ENCODE measurements at regions of chr2 and their contacts with region 1.

Region 1: GRCh38 chr2:165293440-165294353 is 54.5 kb downstream of the SCN2A start:
- DNase-seq: peak; percentile 73
- H3K4me3 ChIP-seq: peak overlapping the region; percentile 50
- H3K27ac ChIP-seq: no peak overlapping the region
- H3K27me3 ChIP-seq: no peaks in the 10 kb centered on the region
- CTCF ChIP-seq: peak; percentile 87

Region 2: GRCh38 chr2:164920430-164920829 is 373.3 kb before region 1 on chr2:
- CTCF ChIA-PET with region 1: interaction called, 19 read pairs
- POLR2A ChIA-PET with region 1: no interaction called
- DNase-seq: peak; percentile 81
- H3K4me3 ChIP-seq: peak overlapping the region; percentile 43
- H3K27ac ChIP-seq: peak overlapping the region; percentile 81
- H3K27me3 ChIP-seq: no peaks in the 10 kb centered on the region
- CTCF ChIP-seq: no peak

Region 3: GRCh38 chr2:165008730-165009315 is 284.9 kb before region 1 on chr2:
- CTCF ChIA-PET with region 1: interaction called, 11 read pairs
- POLR2A ChIA-PET with region 1: no interaction called
- DNase-seq: no peak
- H3K4me3 ChIP-seq: no peak overlapping the region
- H3K27ac ChIP-seq: no peak overlapping the region
- H3K27me3 ChIP-seq: no peaks in the 10 kb centered on the region
- CTCF ChIP-seq: no peak

Region 4: DNA sequence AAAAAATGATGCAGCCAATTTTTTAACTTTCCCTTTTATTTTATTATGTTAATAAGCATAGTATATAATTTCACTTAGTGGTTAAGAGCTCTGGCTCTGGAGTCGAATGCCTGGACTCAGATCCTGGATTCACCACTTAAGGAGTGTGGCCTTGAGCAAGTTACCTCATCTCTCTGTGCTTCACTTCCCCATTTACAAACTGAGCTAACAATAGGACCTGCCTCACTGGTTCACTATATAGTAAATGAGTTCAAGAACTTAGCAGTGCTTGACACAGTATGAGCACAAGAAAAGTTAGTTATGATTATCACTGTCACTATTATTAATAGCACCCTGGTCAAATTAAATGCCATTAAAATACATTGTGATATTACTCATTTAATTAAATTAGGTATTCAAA is 120.5 kb before region 1 on chr2:
- CTCF ChIA-PET with region 1: no interaction called
- POLR2A ChIA-PET with region 1: interaction called, 10 read pairs
- DNase-seq: no peak
- H3K4me3 ChIP-seq: no peak overlapping the region
- H3K27ac ChIP-seq: no peak overlapping the region
- H3K27me3 ChIP-seq: no peaks in the 10 kb centered on the region
- CTCF ChIP-seq: no peak

Region 5: DNA sequence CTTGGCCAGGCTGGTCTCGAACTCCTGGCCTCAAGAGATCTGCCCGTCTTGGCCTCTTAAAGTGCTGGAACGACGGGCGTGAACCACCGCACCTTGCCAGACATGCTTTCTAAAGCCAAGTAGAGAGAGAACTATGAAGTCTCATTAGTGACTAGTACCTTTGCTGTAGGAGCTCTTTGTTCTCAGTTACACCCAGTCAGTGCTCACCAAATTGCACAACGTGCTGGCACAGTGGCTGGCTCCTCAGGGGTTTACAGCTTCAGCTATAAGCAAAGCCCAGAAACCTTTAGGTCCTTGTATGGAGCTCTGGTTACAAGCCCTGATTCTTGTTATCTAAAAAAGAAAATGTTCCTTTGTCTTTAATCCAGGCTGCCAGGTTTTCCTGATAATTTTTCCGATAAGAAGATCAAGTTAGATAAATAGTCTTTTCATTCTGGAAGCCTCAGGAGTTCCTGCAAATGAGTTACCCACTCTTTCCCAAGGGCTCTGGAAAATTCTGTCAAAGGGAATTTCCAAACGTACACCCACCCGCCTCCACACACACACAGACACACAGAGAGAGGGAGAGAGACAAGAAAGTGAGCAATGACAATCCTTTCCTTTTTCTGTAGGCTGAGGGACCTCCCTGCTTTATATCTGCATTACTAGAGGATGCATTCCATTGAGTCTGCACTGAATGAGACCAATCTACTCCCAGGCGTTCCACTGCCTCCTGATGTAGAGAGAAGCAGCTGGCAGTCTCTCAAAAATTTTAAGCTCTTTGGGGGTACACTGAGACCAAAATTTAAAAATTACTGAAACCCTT is 75.6 kb after region 1 on chr2:
- CTCF ChIA-PET with region 1: no interaction called
- POLR2A ChIA-PET with region 1: no interaction called
- DNase-seq: no peak
- H3K4me3 ChIP-seq: no peak overlapping the region
- H3K27ac ChIP-seq: no peak overlapping the region
- H3K27me3 ChIP-seq: no peaks in the 10 kb centered on the region
- CTCF ChIP-seq: no peak

Region 6: GRCh38 chr2:165582409-165582808 is 288.7 kb after region 1 on chr2:
- CTCF ChIA-PET with region 1: no interaction called
- POLR2A ChIA-PET with region 1: no interaction called
- DNase-seq: no peak
- H3K4me3 ChIP-seq: no peak overlapping the region
- H3K27ac ChIP-seq: no peak overlapping the region
- H3K27me3 ChIP-seq: no peaks in the 10 kb centered on the region
- CTCF ChIP-seq: no peak

Region 7: GRCh38 chr2:165825041-165825440 is 531.3 kb after region 1 on chr2:
- CTCF ChIA-PET with region 1: interaction called, 10 read pairs
- POLR2A ChIA-PET with region 1: no interaction called
- DNase-seq: no peak
- H3K4me3 ChIP-seq: no peak overlapping the region
- H3K27ac ChIP-seq: no peak overlapping the region
- H3K27me3 ChIP-seq: no peaks in the 10 kb centered on the region
- CTCF ChIP-seq: no peak

Measured in AG04450 (cell line).